Activated CD4-positive, alpha-beta T cell treated with anti-CD3 and anti-CD28 coated beads for 36 hours (primary cell): ENCODE measurements at regions of chr7 and their contacts with region 1.

Region 1: DNA sequence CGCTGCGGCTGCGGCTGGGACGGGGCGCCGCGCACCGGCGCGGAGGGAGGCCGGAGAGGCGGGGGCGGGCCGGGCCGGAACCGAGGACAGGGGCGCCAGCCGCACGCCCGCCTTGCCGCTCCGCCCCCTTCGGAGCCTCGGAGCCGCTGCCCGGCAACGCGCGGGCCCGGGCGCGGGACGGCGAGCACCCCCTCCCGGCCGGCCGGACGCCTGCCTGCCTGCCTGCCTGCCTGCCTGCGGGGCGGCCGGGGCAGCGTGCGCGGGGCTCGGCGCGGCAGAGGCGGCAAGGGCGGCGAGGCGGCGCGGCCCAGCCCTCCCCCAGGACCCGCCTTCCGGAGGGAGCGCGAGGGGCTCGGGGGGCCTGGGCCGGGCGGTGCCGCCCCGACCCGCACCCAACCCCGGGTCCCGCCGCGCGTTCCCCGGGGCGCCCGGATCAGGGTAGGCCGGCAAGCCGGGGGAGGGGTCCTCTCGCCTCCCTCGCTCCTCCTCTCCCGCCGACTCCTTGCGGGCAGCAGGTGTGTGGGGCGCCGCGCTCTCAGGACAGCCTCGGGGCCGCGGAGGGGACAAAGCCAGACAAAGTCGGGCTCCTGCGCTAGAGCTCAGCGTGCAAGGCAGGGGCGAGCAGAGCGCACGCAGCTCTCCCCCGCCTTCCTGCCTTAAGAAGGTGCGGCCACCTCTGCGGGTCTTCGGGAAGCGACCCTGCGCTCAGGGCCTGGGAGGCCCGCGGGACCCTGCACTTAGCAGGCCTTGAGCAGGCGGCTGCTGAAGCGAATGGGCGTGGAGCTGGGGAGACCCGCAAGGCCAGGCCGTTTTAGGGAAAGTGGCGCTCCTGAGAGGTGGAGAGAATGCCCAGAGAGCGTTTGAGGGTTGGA is at the start of gene KIAA1549:
- DNase-seq: peak; percentile 71
- ATAC-seq: peak; percentile 89
- H3K4me3 Mint-ChIP-seq: peak within 1 kb of the TSS; percentile 75
- H3K27ac Mint-ChIP-seq: peak within 1 kb of the TSS; percentile 12
- H3K4me1 Mint-ChIP-seq: peaks cover 13% of the 10 kb centered on the region
- H3K27me3 Mint-ChIP-seq: peaks cover 40% of the 10 kb centered on the region
- total RNA-seq, gene KIAA1549: 0.46 to 0.53 TPM

Region 2: GRCh38 chr7:138903186-138903820 is 78.3 kb before region 1 on chr7:
- CTCF ChIA-PET with region 1: no interaction called
- POLR2A ChIA-PET with region 1: no interaction called
- intact Hi-C with region 1: loop called in 1 of 2 experiments (anchors 1 kb)
- DNase-seq: peak; percentile 86
- ATAC-seq: peak; percentile 94
- H3K4me3 Mint-ChIP-seq: peak overlapping the region; percentile 66
- H3K27ac Mint-ChIP-seq: peak overlapping the region; percentile 83
- H3K4me1 Mint-ChIP-seq: peaks cover 42% of the 10 kb centered on the region
- H3K27me3 Mint-ChIP-seq: peaks cover 2% of the 10 kb centered on the region

Region 3: GRCh38 chr7:139023076-139023475 is 41.5 kb after region 1 on chr7:
- CTCF ChIA-PET with region 1: no interaction called
- POLR2A ChIA-PET with region 1: no interaction called
- intact Hi-C with region 1: no loop called
- DNase-seq: no peak
- ATAC-seq: no peak
- H3K4me3 Mint-ChIP-seq: no peak overlapping the region
- H3K27ac Mint-ChIP-seq: no peak overlapping the region
- H3K4me1 Mint-ChIP-seq: no peaks in the 10 kb centered on the region
- H3K27me3 Mint-ChIP-seq: no peaks in the 10 kb centered on the region